Gastrocnemius medialis (tissue), 4 donors: ENCODE measurements at regions of chr12 and their contacts with region 1.

Region 1: DNA sequence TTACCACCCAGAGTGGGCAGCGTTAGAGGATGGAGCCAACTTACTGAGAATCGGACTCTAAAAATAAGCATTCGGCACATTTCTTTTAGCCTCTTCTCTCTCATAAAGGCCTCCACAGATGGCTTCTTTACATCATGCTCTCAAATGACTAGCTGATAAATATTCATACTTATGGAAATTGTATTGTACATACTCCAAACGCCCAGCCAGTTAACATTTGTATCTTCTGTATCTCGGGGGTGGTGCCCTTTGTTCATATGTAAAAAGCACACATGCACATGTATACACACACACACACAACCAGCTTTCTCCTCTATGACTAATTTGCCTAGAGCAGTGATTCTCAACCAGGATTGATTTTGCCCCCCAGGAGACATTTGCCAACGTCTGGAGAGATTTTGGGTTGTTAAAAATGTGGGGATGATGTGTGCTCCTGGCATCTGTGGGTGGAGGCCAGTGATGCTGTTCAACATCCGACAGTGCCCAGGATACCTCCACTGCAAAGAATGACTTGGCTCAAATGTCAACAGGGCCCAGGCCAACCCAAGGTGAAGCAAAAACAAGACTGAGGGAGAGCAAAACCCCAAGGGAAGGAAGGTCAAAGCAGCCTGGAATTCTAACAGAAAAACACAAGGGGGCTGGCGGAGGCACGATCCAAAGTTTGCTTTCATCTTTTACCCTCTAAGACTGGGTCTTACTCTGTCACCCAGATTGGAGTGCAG is 15.2 kb upstream of the CDK2AP1 start:
- DNase-seq: no peak
- ATAC-seq: no peak
- H3K4me3 ChIP-seq: no peak overlapping the region
- H3K27ac ChIP-seq: no peak overlapping the region
- H3K4me1 ChIP-seq: no peaks in the 10 kb centered on the region
- H3K27me3 ChIP-seq: no peaks in the 10 kb centered on the region
- CTCF ChIP-seq: no peak
- POLR2A ChIP-seq: no peak

Region 2: DNA sequence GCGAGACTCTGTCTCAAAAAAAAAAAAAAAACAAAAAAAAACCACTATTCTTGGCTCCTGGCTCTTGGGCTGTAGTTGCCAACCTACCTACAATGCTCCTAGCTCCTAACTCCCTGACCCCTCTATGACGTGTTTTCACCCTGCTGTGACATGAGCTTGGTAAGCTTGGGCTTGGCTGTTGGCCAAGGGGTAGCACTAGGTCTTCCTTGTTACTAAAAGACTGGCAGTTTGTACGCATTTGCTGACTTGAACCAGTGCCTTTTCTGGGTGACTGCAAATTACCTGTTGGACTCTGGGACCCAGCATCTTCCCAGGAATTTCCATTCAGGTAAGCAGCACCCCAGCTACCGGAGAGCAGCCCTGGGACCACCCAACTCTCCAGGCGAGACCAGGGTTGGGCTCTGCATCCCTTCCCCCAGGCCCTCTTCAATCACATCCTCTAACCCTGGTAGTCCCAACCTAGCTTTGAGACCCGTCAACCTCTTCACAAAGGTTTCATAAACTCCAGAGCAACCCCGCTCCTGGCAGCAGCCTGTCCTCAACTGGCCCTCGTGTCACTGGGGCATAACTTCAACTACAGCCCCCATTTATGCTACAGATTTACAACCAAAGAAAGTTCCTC is 23.5 kb before region 1 on chr12:
- in situ Hi-C with region 1: no loop called
- intact Hi-C with region 1: loop called (anchors 2 kb)
- DNase-seq: no peak
- ATAC-seq: no peak
- H3K4me3 ChIP-seq: no peak overlapping the region
- H3K27ac ChIP-seq: no peak overlapping the region
- H3K4me1 ChIP-seq: peaks cover 8 to 9% of the 10 kb centered on the region in 2 donors
- H3K27me3 ChIP-seq: no peaks in the 10 kb centered on the region
- CTCF ChIP-seq: no peak
- POLR2A ChIP-seq: no peak